ENCODE measurements at regions of chr3 and their contacts with region 1.

Region 1: GRCh38 chr3:149969940-149970715 is 567 bp downstream of the PFN2 start:
- DNase-seq: peak; percentile 75 to 90
- ATAC-seq: peak; percentile 48 to 59
- H3K4me3 ChIP-seq: peak overlapping the region; percentile 68 to 85 (median 81)
- H3K27ac ChIP-seq: peak overlapping the region; percentile 89 to 97 (median 97)
- H3K4me1 ChIP-seq: peaks cover 19 to 22% of the 10 kb centered on the region in 2 donors
- H3K27me3 ChIP-seq: no peaks in the 10 kb centered on the region
- CTCF ChIP-seq: no peak
- POLR2A ChIP-seq: peak; percentile 46 to 68

Region 2: GRCh38 chr3:149026718-149027117 is 943.4 kb before region 1 on chr3:
- in situ Hi-C with region 1: no loop called
- intact Hi-C with region 1: no loop called
- DNase-seq: no peak
- ATAC-seq: no peak
- H3K4me3 ChIP-seq: no peak overlapping the region
- H3K27ac ChIP-seq: peak overlapping the region in 2 of 4 donors; percentile 11 to 16
- H3K4me1 ChIP-seq: peaks cover 13 to 15% of the 10 kb centered on the region in 2 donors
- H3K27me3 ChIP-seq: no peaks in the 10 kb centered on the region
- CTCF ChIP-seq: no peak
- POLR2A ChIP-seq: no peak

Region 3: GRCh38 chr3:149812606-149813366 is 157.3 kb before region 1 on chr3 and contains the start of gene RNF13:
- in situ Hi-C with region 1: no loop called
- intact Hi-C with region 1: loop called (anchors 2 kb)
- DNase-seq: peak; percentile 98 to 99
- ATAC-seq: peak; percentile 91 to 96
- H3K4me3 ChIP-seq: peak within 1 kb of the TSS; percentile 72 to 90 (median 82)
- H3K27ac ChIP-seq: peak within 1 kb of the TSS; percentile 91 to 98 (median 96)
- H3K4me1 ChIP-seq: peaks cover 41 to 48% of the 10 kb centered on the region in 2 donors
- H3K27me3 ChIP-seq: no peaks in the 10 kb centered on the region
- CTCF ChIP-seq: no peak
- POLR2A ChIP-seq: peak; percentile 75 to 89
- total RNA-seq, gene RNF13: 48.3 to 63.6 (median 56.9) TPM

Region 4: GRCh38 chr3:150062492-150062891 is 92.4 kb after region 1 on chr3:
- in situ Hi-C with region 1: no loop called
- intact Hi-C with region 1: loop called (anchors 1 kb)
- DNase-seq: peak in 1 of 2 donors; percentile 45
- ATAC-seq: peak; percentile 42 to 55
- H3K4me3 ChIP-seq: peak overlapping the region; percentile 2 to 29 (median 16)
- H3K27ac ChIP-seq: peak overlapping the region; percentile 92 to 95 (median 94)
- H3K4me1 ChIP-seq: peaks cover 40 to 65% of the 10 kb centered on the region in 2 donors
- H3K27me3 ChIP-seq: no peaks in the 10 kb centered on the region
- CTCF ChIP-seq: no peak
- POLR2A ChIP-seq: peak in 1 of 2 donors; percentile 52

Region 5: GRCh38 chr3:150132101-150132749 is 162.1 kb after region 1 on chr3:
- in situ Hi-C with region 1: no loop called
- intact Hi-C with region 1: no loop called
- DNase-seq: no peak
- ATAC-seq: no peak
- H3K4me3 ChIP-seq: no peak overlapping the region
- H3K27ac ChIP-seq: no peak overlapping the region
- H3K4me1 ChIP-seq: no peaks in the 10 kb centered on the region
- H3K27me3 ChIP-seq: no peaks in the 10 kb centered on the region
- CTCF ChIP-seq: no peak
- POLR2A ChIP-seq: no peak

Region 6: GRCh38 chr3:150158943-150159625 is 189.0 kb after region 1 on chr3:
- in situ Hi-C with region 1: no loop called
- intact Hi-C with region 1: no loop called
- DNase-seq: no peak
- ATAC-seq: peak in 1 of 2 donors; percentile 53
- H3K4me3 ChIP-seq: no peak overlapping the region
- H3K27ac ChIP-seq: no peak overlapping the region
- H3K4me1 ChIP-seq: no peaks in the 10 kb centered on the region
- H3K27me3 ChIP-seq: no peaks in the 10 kb centered on the region
- CTCF ChIP-seq: no peak
- POLR2A ChIP-seq: no peak

Region 7: DNA sequence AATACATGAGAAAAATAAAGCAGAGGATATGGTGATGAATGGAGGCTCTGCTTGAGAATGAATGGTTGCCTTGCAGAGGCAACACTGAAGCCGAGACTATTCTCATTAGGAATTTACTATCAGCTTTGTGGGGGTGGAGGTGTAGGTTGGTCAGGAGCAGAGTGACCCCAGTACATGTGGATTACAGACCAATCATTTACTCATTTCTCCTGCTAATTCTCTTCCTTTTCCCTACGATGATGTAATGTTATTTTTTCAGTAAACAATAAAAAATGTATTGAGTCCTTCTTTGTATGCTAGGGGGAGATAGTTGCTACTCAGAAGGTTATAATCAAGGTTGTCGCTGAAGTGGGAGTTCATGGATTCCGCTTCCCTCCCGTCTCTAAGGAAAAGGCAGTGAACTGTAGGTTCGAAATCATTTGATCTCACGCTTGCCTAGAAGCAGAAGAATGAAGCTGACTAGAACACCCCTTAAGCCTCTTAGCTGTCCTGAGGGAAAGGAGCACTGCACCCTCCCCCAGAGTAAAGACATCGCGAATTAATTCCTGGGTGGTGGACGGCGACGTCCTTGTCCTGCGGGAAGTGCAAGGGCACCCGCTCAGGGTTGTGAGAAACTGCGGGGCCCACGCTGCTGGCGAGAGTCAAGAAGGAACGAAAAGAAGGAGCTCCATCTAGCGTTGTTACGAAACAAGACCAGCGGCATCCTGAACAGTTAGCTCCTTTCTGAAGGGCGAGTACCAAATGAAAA is 213.7 kb after region 1 on chr3:
- in situ Hi-C with region 1: loop called (anchors 5 to 10 kb)
- intact Hi-C with region 1: loop called (anchors 1 kb)
- DNase-seq: peak; percentile 74 to 82
- ATAC-seq: peak; percentile 99
- H3K4me3 ChIP-seq: peak overlapping the region; percentile 35 to 46 (median 38)
- H3K27ac ChIP-seq: peak overlapping the region; percentile 71 to 77 (median 74)
- H3K4me1 ChIP-seq: peaks cover 5 to 9% of the 10 kb centered on the region in 2 donors
- H3K27me3 ChIP-seq: no peaks in the 10 kb centered on the region
- CTCF ChIP-seq: peak; percentile 50 to 77 (median 70)
- POLR2A ChIP-seq: no peak

Region 8: DNA sequence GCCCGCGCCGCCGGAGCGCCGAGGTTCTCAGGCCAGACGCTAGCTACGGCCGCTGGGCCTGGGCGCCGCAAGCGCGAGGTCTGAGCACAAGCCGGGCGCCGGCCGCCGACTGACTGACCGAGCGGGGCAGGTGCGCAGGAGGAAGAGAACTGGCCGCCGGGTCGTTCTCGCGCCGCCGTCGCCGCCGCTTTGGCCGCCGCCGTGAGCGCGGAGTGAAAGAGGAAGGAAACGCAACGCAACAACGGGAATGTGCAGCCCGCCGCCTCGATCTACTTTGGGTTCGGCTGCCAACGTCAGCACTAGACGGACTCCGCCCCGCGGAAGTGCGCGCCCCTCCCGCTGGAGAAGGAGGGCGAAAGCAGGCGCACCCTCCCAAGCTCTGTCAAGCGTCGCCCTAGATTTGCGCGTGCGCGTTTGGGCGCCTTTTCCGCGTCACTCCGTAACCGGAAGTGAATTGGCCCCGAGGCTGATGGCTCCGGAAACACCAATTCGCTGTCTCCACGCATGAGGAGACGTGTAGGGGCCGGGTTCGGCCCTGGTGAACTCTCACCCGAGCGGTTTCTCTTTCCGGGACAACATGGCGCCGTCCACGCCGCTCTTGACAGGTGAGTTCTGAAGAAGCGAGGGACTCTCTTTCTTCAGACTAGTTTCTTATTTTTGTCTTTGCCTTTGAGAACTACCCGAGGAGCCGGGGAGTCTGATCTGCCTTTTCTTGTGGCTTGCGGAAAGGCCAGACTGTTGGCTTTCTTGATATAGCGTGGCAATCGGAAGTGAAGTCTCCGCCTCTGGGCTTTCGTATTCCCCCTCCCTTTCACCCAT is 576.3 kb after region 1 on chr3 and contains the starts of genes EIF2A and SERP1:
- in situ Hi-C with region 1: no loop called
- intact Hi-C with region 1: loop called (anchors 10 kb)
- DNase-seq: peak; percentile 97 to 98
- ATAC-seq: peak; percentile 93
- H3K4me3 ChIP-seq: peak within 1 kb of the TSS; percentile 79 to 98 (median 94)
- H3K27ac ChIP-seq: peak within 1 kb of the TSS; percentile 94 to 100 (median 98)
- H3K4me1 ChIP-seq: peaks cover 32 to 38% of the 10 kb centered on the region in 2 donors
- H3K27me3 ChIP-seq: no peaks in the 10 kb centered on the region
- CTCF ChIP-seq: peak in 1 of 5 experiments; percentile 5
- POLR2A ChIP-seq: peak; percentile 95 to 96
- total RNA-seq, gene EIF2A: 150 to 168 (median 163) TPM
- total RNA-seq, gene SERP1: 25.3 to 52.7 (median 36.3) TPM